ENCODE measurements at regions of chr6 and their contacts with region 1.

Region 1: DNA sequence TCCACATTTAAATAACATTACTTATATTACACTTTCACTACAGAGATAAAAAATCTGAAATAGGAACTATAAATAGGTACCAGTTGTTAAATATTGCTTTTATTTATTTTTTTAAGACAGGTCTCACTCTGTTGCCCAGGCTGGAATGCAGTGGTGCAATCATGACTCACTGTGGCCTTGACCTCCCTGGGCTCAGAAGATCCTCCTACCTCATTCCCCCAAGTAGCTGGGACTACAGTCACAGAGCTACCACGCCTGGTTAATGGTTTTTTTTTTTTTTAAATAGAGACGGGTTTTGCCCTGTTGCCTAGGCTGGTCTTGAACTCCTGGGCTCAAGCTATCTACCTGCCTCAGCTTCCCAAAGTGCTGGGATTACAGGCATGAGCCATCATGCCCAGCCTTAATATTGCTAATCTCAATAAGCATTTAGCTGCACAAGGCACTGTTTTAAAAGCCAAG is 17.3 kb downstream of the EEF1E1 start:
- DNase-seq: peak; percentile 91
- ATAC-seq: peak; percentile 77
- H3K4me3 ChIP-seq: no peak overlapping the region
- H3K27ac ChIP-seq: peak overlapping the region; percentile 86
- H3K4me1 ChIP-seq: peaks cover 57% of the 10 kb centered on the region
- H3K27me3 ChIP-seq: no peaks in the 10 kb centered on the region
- CTCF ChIP-seq: no peak

Region 2: DNA sequence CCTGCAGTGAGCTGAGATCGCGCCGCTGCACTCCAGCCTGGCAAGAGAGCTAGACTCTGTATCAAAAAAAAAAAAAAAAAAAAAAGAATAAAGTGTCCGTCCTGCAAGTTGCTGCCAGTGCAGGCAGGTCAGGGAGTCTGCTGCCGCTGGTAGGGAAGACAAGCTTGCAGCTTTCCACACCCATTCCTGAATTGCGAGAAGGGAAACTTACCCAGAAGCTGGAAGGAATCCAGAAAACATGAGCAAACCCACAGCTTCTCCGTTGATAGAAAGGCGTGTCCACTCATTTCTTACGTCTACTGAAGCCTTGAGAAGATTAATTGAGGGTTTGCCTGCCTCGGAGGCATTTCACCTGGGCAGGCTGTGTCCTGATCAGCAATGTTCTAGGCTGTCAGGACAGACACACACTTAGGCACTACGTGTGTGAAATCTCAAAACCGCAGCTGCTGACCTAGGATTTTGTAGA is 605.2 kb before region 1 on chr6:
- CTCF ChIA-PET with region 1: no interaction called
- POLR2A ChIA-PET with region 1: no interaction called
- intact Hi-C with region 1: no loop called
- DNase-seq: peak; percentile 91
- ATAC-seq: peak; percentile 97
- H3K4me3 ChIP-seq: peak overlapping the region; percentile 43
- H3K27ac ChIP-seq: no peak overlapping the region; the same call in 1 of the 2 replicates
- H3K4me1 ChIP-seq: 0 out of 2 replicates have a peak, but pooled peaks cover 3% of the 10 kb centered on the region
- H3K27me3 ChIP-seq: no peaks in the 10 kb centered on the region
- CTCF ChIP-seq: no peak

Region 3: GRCh38 chr6:7986219-7986618 is 98.9 kb before region 1 on chr6:
- CTCF ChIA-PET with region 1: no interaction called
- POLR2A ChIA-PET with region 1: no interaction called
- intact Hi-C with region 1: no loop called
- DNase-seq: no peak
- ATAC-seq: no peak
- H3K4me3 ChIP-seq: no peak overlapping the region
- H3K27ac ChIP-seq: no peak overlapping the region
- H3K4me1 ChIP-seq: peaks cover 4% of the 10 kb centered on the region; the same call in 1 of the 2 replicates
- H3K27me3 ChIP-seq: no peaks in the 10 kb centered on the region
- CTCF ChIP-seq: no peak

Region 4: GRCh38 chr6:8102122-8102958 is 17.3 kb after region 1 on chr6 and contains the start of gene EEF1E1:
- CTCF ChIA-PET with region 1: no interaction called
- POLR2A ChIA-PET with region 1: interaction called, 3 read pairs
- intact Hi-C with region 1: loop called (anchors 2 kb)
- DNase-seq: peak; percentile 94
- ATAC-seq: peak; percentile 93
- H3K4me3 ChIP-seq: peak within 1 kb of the TSS; percentile 81
- H3K27ac ChIP-seq: peak within 1 kb of the TSS; percentile 39
- H3K4me1 ChIP-seq: peaks cover 9% of the 10 kb centered on the region
- H3K27me3 ChIP-seq: no peaks in the 10 kb centered on the region
- CTCF ChIP-seq: no peak
- total RNA-seq, gene EEF1E1: 64.6 and 72.6 TPM in 2 replicates

Region 5: GRCh38 chr6:8108031-8108660 is 23.1 kb after region 1 on chr6:
- CTCF ChIA-PET with region 1: no interaction called
- POLR2A ChIA-PET with region 1: no interaction called
- intact Hi-C with region 1: loop called (anchors 2 kb)
- DNase-seq: peak; percentile 94
- ATAC-seq: peak; percentile 99
- H3K4me3 ChIP-seq: no peak overlapping the region
- H3K27ac ChIP-seq: peak overlapping the region; percentile 94
- H3K4me1 ChIP-seq: peaks cover 20% of the 10 kb centered on the region
- H3K27me3 ChIP-seq: no peaks in the 10 kb centered on the region
- CTCF ChIP-seq: no peak

Region 6: GRCh38 chr6:8329562-8329961 is 244.5 kb after region 1 on chr6:
- CTCF ChIA-PET with region 1: no interaction called
- POLR2A ChIA-PET with region 1: no interaction called
- intact Hi-C with region 1: no loop called
- DNase-seq: no peak
- ATAC-seq: no peak
- H3K4me3 ChIP-seq: no peak overlapping the region
- H3K27ac ChIP-seq: no peak overlapping the region
- H3K4me1 ChIP-seq: no peaks in the 10 kb centered on the region
- H3K27me3 ChIP-seq: peaks cover 24% of the 10 kb centered on the region
- CTCF ChIP-seq: no peak